ENCODE measurements at regions of chr11 and their contacts with region 1.

Region 1: GRCh38 chr11:75388386-75389275 is 10.7 kb upstream of the RPS3 start:
- DNase-seq: peak; percentile 86 to 87
- ATAC-seq: peak; percentile 57 to 73
- H3K4me3 ChIP-seq: no peak overlapping the region
- H3K27ac ChIP-seq: peak overlapping the region; percentile 36 to 75; a peak in 5 of 6 replicates
- H3K4me1 ChIP-seq: peaks cover 39% of the 10 kb centered on the region
- CTCF ChIP-seq: peak; percentile 95
- EP300 ChIP-seq: no peak
- POLR2A ChIP-seq: no peak
- RAD21 ChIP-seq: peak; percentile 92 to 94

Region 2: DNA sequence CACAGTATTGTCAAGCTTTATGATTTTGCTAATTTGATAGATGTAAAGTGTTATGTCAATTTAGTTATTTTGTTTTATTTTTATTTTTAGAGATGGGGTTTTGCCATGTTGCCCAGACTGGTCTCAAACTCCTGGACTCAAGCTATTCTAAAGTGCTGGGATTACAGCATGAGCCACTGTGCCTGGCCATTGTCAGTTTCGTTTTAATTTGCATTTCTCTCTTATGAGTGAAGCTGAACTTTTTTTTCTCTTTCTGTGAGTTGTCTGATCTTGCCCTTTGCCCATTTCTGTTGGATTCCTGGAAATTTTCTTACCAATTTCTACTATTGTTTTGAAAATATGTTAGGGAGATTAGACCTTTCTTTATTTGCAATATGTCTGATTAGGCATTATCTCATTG is 384.4 kb before region 1 on chr11:
- CTCF ChIA-PET with region 1: no interaction called
- POLR2A ChIA-PET with region 1: no interaction called
- DNase-seq: no peak
- ATAC-seq: no peak
- H3K4me3 ChIP-seq: no peak overlapping the region
- H3K27ac ChIP-seq: no peak overlapping the region
- H3K4me1 ChIP-seq: no peaks in the 10 kb centered on the region
- CTCF ChIP-seq: no peak
- EP300 ChIP-seq: no peak
- POLR2A ChIP-seq: no peak
- RAD21 ChIP-seq: no peak

Region 3: DNA sequence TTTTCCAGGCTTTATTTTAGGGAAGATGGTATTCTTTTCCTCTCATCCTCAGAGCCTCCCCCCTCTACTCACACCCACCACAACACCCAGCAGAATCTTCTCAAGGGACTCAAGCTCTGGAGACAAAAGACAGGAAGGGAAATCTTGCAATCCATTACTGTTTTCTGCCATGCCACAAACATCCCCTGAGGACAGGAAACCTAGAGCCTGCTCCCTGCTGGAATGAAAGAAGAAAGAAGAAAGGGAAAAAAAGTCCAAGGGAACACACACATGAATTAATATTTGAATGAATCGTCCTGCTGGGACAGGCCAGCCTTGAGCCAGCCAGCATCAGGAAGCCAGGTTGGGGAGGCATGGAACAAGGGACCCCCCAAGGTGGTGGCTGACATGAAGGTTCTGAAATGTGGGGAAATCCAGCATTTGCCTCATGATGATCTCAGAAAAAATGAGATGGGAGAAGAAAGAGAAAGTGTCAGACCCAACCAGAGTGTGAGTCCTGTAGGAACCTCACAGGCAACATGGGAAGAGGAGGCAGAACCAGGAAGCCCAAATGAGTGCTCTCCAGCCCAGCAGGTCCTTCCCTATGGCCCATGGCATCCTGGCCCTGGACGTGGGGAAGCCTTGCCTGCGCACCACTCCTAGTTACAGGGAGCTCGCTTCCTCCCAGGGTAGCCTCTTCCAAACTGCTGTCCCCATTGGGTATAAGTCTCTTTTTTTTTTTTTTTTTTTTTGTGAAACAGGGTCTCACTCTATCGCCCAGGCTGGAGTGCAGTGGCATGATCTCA is 203.6 kb before region 1 on chr11:
- CTCF ChIA-PET with region 1: no interaction called
- POLR2A ChIA-PET with region 1: no interaction called
- DNase-seq: no peak
- ATAC-seq: no peak
- H3K4me3 ChIP-seq: no peak overlapping the region
- H3K27ac ChIP-seq: no peak overlapping the region
- H3K4me1 ChIP-seq: no peaks in the 10 kb centered on the region
- CTCF ChIP-seq: no peak
- EP300 ChIP-seq: no peak
- POLR2A ChIP-seq: no peak
- RAD21 ChIP-seq: no peak

Region 4: DNA sequence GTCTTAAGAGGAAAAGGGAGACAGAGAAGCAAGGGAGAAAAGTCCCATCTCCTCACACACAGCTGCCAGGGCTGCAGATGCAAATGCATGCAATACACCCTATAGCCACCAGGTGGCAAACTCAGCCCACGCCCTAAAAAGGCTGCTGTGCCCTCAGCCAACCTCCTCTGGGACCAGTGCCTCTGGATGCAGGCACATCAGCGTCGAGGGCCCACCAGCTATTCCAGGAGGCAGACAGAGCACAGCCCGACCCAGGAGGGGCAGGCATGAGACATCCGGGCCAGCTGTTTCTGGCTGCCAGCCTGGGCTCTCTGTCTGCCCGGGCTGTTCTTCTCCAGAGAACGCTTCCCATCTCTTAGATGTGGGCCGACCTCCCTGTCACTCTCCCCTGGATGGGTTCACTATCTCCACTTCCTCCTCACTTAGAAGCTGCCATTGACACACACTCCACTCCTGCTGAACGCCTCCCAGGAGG is 108.4 kb before region 1 on chr11:
- CTCF ChIA-PET with region 1: interaction called, 581 read pairs
- POLR2A ChIA-PET with region 1: interaction called, 3 read pairs
- DNase-seq: peak; percentile 79 to 93
- ATAC-seq: peak; percentile 85 to 97
- H3K4me3 ChIP-seq: no peak overlapping the region
- H3K27ac ChIP-seq: peak overlapping the region in 1 of 2 experiments; percentile 28; a peak in 1 of 6 replicates
- H3K4me1 ChIP-seq: peaks cover 10% of the 10 kb centered on the region
- CTCF ChIP-seq: peak; percentile 90
- EP300 ChIP-seq: no peak
- POLR2A ChIP-seq: no peak
- RAD21 ChIP-seq: peak; percentile 96 to 99

Region 5: DNA sequence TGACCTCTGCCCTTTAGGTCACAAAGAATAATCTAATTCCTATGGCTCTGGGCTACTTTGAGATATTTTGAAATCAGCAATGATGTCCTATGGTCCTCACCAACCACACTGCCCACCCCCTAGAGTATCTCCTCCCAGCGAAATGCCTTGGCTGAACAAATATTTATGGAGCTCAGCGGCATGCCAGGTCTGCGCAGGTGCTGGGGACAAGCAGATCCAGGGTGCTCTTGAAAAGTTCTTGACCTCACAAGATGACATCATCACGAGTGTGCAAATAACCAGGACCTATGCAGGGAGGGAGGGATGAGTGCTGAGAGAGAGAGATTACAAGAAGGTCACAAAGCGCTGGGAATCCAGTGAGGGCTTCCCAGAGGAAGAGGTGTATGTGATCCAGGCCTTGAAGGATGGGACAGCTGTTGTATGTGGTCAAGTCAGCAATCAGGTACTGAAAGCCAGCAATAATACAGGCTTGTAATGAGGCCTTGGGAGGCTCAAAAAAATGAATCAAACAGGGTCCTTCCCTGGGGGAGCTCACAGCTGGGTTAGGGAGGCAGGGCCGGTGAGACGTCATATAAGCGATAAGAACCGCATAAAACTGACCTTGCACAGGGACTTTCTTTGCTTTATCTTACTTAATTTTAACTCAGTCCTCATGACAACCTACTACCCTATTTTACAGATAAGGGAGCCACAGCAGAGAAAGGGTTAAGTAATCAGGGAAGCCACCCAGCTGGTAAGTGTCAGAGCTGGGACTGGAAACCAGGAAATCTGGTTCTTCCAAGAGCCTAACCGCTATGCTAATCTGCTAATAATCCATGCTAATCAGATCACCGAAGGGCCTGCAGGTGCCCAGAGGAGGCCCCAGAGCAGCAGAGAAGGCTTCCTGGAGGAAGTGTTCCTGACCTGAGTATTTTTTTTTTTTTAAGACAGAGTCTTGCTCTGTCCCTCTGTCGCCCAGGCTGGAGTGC is 45.4 kb before region 1 on chr11:
- CTCF ChIA-PET with region 1: interaction called, 108 read pairs
- POLR2A ChIA-PET with region 1: no interaction called
- DNase-seq: peak; percentile 76 to 94
- ATAC-seq: peak; percentile 44 to 56; a peak in 5 of 6 replicates
- H3K4me3 ChIP-seq: no peak overlapping the region
- H3K27ac ChIP-seq: peak overlapping the region; percentile 76 to 80
- H3K4me1 ChIP-seq: peaks cover 81% of the 10 kb centered on the region
- CTCF ChIP-seq: no peak
- EP300 ChIP-seq: no peak
- POLR2A ChIP-seq: no peak
- RAD21 ChIP-seq: no peak

Region 6: DNA sequence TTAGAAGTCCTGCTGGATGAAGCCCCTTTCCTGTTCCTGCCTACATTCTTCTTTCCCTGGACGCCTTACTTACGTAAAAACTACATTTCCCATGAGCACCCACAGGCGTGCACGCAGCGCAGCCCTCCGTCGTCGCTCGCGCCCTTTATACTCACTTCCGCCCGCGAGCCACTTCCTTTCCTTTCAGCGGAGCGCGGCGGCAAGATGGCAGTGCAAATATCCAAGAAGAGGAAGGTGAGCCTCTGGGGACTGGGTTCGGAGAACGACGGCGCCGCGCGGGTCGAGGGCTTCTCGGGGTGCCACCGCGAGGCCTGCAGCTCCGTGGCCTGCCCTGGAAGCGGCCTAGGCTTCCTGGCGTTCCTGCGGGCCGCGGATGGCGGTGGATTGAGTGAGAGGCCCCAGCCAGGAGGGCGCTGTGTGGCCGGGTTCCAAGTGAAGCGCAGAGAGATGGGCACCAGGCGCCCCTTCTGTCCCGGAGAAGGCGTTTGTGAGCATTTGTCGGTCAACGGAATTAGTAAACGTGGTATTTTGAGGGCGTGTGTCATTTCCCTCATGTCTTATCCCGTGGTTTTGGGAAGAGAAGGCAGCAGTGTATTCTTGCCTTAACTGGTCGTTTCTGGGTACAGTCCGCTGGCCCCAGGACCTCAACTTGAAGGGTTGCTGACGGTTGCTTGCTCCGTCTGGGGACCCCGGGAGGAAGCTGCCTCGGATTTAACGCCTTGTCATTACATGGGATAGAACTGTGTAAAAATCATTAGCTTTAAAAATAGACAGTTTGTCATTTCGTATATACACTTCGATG is 10.9 kb after region 1 on chr11 and contains the start of gene RPS3:
- CTCF ChIA-PET with region 1: interaction called, 53 read pairs
- POLR2A ChIA-PET with region 1: no interaction called
- DNase-seq: peak; percentile 88 to 93
- ATAC-seq: peak; percentile 94 to 96
- H3K4me3 ChIP-seq: peak within 1 kb of the TSS; percentile 77
- H3K27ac ChIP-seq: peak within 1 kb of the TSS; percentile 90 to 93
- H3K4me1 ChIP-seq: peaks cover 34% of the 10 kb centered on the region
- CTCF ChIP-seq: peak; percentile 28; the same call in 1 of the 3 replicates
- EP300 ChIP-seq: no peak
- POLR2A ChIP-seq: peak; percentile 97
- RAD21 ChIP-seq: no peak
- polyA plus RNA-seq, gene RPS3: 2,571 and 3,468 TPM in 2 replicates

Region 7: GRCh38 chr11:75422253-75423231 is 33.9 kb after region 1 on chr11:
- CTCF ChIA-PET with region 1: interaction called, 27 read pairs
- POLR2A ChIA-PET with region 1: interaction called, 3 read pairs
- DNase-seq: peak; percentile 70 to 93
- ATAC-seq: peak; percentile 72 to 83
- H3K4me3 ChIP-seq: no peak overlapping the region
- H3K27ac ChIP-seq: peak overlapping the region; percentile 90 to 93
- H3K4me1 ChIP-seq: peaks cover 64% of the 10 kb centered on the region
- CTCF ChIP-seq: no peak
- EP300 ChIP-seq: peak; percentile 55 to 73; a peak in 3 of 5 replicates
- POLR2A ChIP-seq: no peak
- RAD21 ChIP-seq: no peak

Region 8: GRCh38 chr11:75450826-75451821 is 62.5 kb after region 1 on chr11:
- CTCF ChIA-PET with region 1: interaction called, 29 read pairs
- POLR2A ChIA-PET with region 1: no interaction called
- DNase-seq: peak in 1 of 2 experiments; percentile 28
- ATAC-seq: peak in 1 of 2 experiments; percentile 66; a peak in 3 of 6 replicates
- H3K4me3 ChIP-seq: no peak overlapping the region
- H3K27ac ChIP-seq: no peak overlapping the region
- H3K4me1 ChIP-seq: peaks cover 14% of the 10 kb centered on the region; the same call in 1 of the 3 replicates
- CTCF ChIP-seq: peak; percentile 47
- EP300 ChIP-seq: no peak
- POLR2A ChIP-seq: no peak
- RAD21 ChIP-seq: peak; percentile 32 to 41; a peak in 4 of 5 replicates

Region 9: GRCh38 chr11:75505916-75506692 is 117.5 kb after region 1 on chr11:
- CTCF ChIA-PET with region 1: no interaction called
- POLR2A ChIA-PET with region 1: no interaction called
- DNase-seq: no peak
- ATAC-seq: no peak
- H3K4me3 ChIP-seq: no peak overlapping the region
- H3K27ac ChIP-seq: no peak overlapping the region
- H3K4me1 ChIP-seq: peaks cover 26% of the 10 kb centered on the region
- CTCF ChIP-seq: no peak
- EP300 ChIP-seq: no peak
- POLR2A ChIP-seq: no peak
- RAD21 ChIP-seq: no peak